Right cardiac atrium (tissue), 5 donors: ENCODE measurements at regions of chr15 and their contacts with region 1.

Region 1: GRCh38 chr15:75801859-75802593 is 41.2 kb upstream of the UBE2Q2 start:
- DNase-seq: peak; percentile 85 to 92 (median 91)
- ATAC-seq: peak; percentile 97 to 99
- H3K4me3 ChIP-seq: no peak overlapping the region
- H3K27ac ChIP-seq: no peak overlapping the region
- H3K4me1 ChIP-seq: no peaks in the 10 kb centered on the region
- H3K27me3 ChIP-seq: no peaks in the 10 kb centered on the region

Region 2: DNA sequence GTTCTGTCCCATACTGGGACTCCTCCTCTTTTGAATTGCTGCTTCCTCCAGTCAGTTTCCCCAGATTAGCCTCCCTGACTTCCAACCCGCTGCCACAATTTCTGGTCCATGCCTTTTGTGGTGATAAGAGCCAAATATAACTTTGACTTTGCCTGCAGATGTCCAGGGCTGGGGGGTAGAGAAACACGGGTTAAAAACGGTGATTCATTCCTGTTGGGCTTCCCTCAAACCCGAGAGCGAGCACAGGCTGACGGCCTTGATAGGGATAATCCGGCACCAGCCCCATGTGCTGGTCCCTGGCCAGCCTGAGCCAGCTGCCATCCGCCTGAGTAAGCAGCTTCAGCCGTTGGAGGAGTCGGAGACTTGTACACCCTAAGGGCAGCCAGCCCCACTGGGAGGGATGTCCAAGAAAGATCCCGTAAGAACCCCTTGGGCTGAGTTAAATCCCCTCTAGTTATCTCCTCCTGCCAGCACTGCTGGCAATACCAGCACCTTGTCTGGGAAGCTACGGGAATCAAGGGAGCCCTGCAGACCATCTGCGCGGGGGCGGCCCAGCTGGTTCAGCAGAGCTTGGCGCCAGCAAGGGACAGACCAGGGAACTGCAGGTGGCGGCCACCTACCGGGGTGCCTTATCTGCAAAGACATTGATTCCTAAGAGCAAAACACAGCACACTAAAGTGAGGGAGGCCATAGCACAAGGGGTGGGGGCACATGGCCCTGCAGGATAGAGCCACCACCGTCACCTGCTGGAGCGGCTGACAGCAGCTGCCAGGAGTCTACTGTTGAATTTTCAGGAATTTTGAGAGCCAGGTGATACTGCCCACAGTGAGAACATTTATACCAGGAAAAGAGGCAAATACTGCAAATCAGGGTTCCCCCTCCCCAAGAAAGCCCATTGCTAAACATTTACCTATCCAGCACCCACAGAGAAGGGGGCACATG is 107.5 kb before region 1 on chr15:
- intact Hi-C with region 1: loop called in 1 of 4 experiments (anchors 10 kb)
- DNase-seq: peak; percentile 89 to 93 (median 91)
- ATAC-seq: peak; percentile 82 to 84
- H3K4me3 ChIP-seq: no peak overlapping the region
- H3K27ac ChIP-seq: peak overlapping the region; percentile 0
- H3K4me1 ChIP-seq: peaks cover 4% of the 10 kb centered on the region
- H3K27me3 ChIP-seq: no peaks in the 10 kb centered on the region

Region 3: GRCh38 chr15:75727851-75728715 is 73.9 kb before region 1 on chr15:
- intact Hi-C with region 1: loop called in 1 of 4 experiments (anchors 5 kb)
- DNase-seq: peak in 2 of 3 donors; percentile 84 to 86
- ATAC-seq: no peak
- H3K4me3 ChIP-seq: no peak overlapping the region
- H3K27ac ChIP-seq: no peak overlapping the region
- H3K4me1 ChIP-seq: peaks cover 8% of the 10 kb centered on the region
- H3K27me3 ChIP-seq: no peaks in the 10 kb centered on the region

Region 4: GRCh38 chr15:75758071-75758872 is 43.8 kb before region 1 on chr15:
- intact Hi-C with region 1: no loop called
- DNase-seq: peak; percentile 90 to 96 (median 95)
- ATAC-seq: peak; percentile 96 to 97
- H3K4me3 ChIP-seq: peak overlapping the region; percentile 43
- H3K27ac ChIP-seq: peak overlapping the region; percentile 44
- H3K4me1 ChIP-seq: no peaks in the 10 kb centered on the region
- H3K27me3 ChIP-seq: no peaks in the 10 kb centered on the region

Region 5: DNA sequence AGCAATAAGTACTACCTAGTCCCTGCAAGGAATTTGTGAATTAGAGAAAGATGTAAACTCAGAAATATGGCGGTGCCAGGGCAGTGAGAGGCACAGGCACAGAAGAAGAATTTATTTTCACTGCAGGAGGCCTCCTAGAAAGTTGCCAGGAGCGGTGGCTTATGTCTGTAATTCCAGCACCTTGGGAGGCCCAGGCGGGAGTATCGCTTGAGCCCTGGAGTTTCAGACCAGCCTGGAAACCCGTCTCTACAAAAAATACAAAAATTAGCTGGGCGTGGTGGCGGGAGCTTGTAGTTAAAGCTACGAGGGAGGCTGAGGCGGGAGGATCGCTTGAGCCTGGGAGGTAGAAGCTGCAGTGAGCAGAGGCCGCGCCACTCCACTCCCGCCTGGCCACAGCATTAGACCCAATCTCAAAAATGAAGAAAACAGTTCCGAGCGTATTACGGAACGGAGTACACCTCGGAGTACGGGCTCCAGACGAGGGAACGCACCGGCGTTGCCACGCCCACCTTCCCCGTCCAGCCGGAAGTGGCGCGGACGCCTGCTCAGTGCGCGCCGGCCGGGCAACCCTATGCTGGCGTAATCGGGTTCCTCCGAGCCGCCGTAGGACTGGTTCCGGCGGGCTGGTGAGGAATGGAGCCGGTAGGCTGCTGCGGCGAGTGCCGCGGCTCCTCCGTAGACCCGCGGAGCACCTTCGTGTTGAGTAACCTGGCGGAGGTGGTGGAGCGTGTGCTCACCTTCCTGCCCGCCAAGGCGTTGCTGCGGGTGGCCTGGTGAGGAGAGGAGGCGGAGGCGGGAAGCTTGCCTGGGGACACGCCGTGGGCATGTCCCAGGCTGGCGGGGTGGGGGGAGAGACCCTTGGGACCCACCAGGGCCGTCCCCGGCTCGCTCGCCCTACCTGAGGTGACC is 101.6 kb after region 1 on chr15 and contains the start of gene FBXO22:
- intact Hi-C with region 1: no loop called
- DNase-seq: peak; percentile 93 to 96 (median 96)
- ATAC-seq: peak; percentile 99
- H3K4me3 ChIP-seq: peak within 1 kb of the TSS; percentile 54
- H3K27ac ChIP-seq: peak within 1 kb of the TSS; percentile 32
- H3K4me1 ChIP-seq: no peaks in the 10 kb centered on the region
- H3K27me3 ChIP-seq: no peaks in the 10 kb centered on the region
- total RNA-seq, gene FBXO22: 18.8 to 22.8 (median 20.2) TPM

Region 6: GRCh38 chr15:76223521-76223920 is 421.5 kb after region 1 on chr15:
- intact Hi-C with region 1: no loop called
- DNase-seq: no peak
- ATAC-seq: no peak
- H3K4me3 ChIP-seq: no peak overlapping the region
- H3K27ac ChIP-seq: no peak overlapping the region
- H3K4me1 ChIP-seq: no peaks in the 10 kb centered on the region
- H3K27me3 ChIP-seq: no peaks in the 10 kb centered on the region